HEK293 (cell line): ENCODE measurements at regions of chr2 and their contacts with region 1.

Region 1: GRCh38 chr2:26033818-26034636 is at the start of gene RAB10:
- H3K4me3 ChIP-seq: peak within 1 kb of the TSS; percentile 92
- H3K27ac ChIP-seq: peak within 1 kb of the TSS; percentile 91
- H3K4me1 ChIP-seq: peaks cover 3% of the 10 kb centered on the region; the same call in 1 of the 2 replicates
- CTCF ChIP-seq: 0 out of 2 replicates have a peak, but pooled peaks have one; percentile 7

Region 2: DNA sequence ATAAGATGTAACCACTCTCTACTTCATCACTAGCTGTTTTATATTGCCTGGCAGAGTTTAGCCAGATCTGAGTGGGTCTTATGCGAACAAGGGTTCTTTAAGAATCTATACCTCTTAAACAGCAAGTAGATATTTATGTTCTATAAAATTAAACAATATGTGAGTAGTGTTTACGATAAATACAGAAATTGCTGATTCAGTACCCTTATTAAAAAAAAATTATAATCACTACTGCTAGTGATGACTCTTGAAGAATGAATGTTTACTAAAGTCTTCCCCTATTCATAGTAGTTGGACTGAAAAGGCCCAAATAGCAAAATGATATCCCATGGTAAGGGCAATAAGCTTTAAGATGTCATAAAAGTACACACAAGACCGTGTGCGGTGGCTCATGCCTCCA is 261.9 kb before region 1 on chr2:
- CTCF ChIA-PET with region 1: no interaction called
- POLR2A ChIA-PET with region 1: no interaction called
- H3K4me3 ChIP-seq: no peak overlapping the region
- H3K27ac ChIP-seq: no peak overlapping the region
- H3K4me1 ChIP-seq: no peaks in the 10 kb centered on the region
- CTCF ChIP-seq: no peak

Region 3: GRCh38 chr2:25867396-25868003 is 166.5 kb before region 1 on chr2:
- CTCF ChIA-PET with region 1: no interaction called
- POLR2A ChIA-PET with region 1: no interaction called
- H3K4me3 ChIP-seq: no peak overlapping the region
- H3K27ac ChIP-seq: no peak overlapping the region
- H3K4me1 ChIP-seq: no peaks in the 10 kb centered on the region
- CTCF ChIP-seq: no peak

Region 4: GRCh38 chr2:25878361-25879132 is 155.5 kb before region 1 on chr2 and contains the start of gene ASXL2:
- CTCF ChIA-PET with region 1: no interaction called
- POLR2A ChIA-PET with region 1: interaction called, 11 read pairs
- H3K4me3 ChIP-seq: peak within 1 kb of the TSS; percentile 95
- H3K27ac ChIP-seq: peak within 1 kb of the TSS; percentile 71
- H3K4me1 ChIP-seq: peaks cover 12% of the 10 kb centered on the region
- CTCF ChIP-seq: no peak; the same call in 1 of the 2 replicates

Region 5: DNA sequence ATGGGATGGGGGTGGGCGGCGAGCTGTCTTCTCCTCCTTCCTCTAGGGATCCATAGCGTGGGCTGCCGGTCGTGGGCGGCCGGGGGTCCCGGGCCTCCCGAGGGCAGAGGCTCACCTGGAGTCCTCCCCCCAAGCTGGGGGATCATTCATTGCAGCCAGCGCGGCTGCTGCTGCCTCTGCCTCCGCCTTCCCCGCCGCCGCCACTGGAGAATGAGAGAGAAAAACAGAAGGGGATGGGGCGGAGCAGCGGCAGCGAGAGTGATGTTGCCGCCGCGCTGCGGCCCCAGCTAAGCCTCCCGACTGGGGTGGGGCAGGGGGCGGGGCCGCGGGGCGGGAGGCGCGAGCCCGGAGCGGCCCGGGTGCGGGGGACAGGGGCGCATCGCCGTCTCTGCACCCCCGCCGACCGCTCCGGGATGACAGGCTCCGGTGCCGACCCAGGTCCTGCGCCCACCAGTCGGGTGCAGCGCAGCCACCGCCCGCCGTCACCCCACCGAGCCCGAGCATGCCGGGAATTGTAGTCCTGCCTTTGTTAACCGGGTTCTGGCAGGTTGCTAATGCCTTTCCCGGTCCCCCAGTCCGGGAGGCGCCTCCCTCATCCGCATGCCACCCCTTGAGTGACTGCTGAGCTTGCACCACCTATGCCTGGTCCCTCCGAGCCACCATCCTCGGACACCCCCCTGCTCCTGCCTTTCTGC is 51.6 kb before region 1 on chr2 and contains the start of gene KIF3C:
- CTCF ChIA-PET with region 1: interaction called, 5 read pairs
- POLR2A ChIA-PET with region 1: interaction called, 12 read pairs
- H3K4me3 ChIP-seq: peak within 1 kb of the TSS; percentile 71
- H3K27ac ChIP-seq: peak within 1 kb of the TSS; percentile 65; the same call in 1 of the 2 replicates
- H3K4me1 ChIP-seq: peaks cover 8% of the 10 kb centered on the region
- CTCF ChIP-seq: no peak

Region 6: GRCh38 chr2:26011990-26012856 is 21.8 kb before region 1 on chr2:
- CTCF ChIA-PET with region 1: interaction called, 3 read pairs
- POLR2A ChIA-PET with region 1: interaction called, 24 read pairs
- H3K4me3 ChIP-seq: no peak overlapping the region
- H3K27ac ChIP-seq: no peak overlapping the region
- H3K4me1 ChIP-seq: peaks cover 4% of the 10 kb centered on the region
- CTCF ChIP-seq: no peak

Region 7: GRCh38 chr2:26018176-26018716 is 15.8 kb before region 1 on chr2:
- CTCF ChIA-PET with region 1: interaction called, 6 read pairs
- POLR2A ChIA-PET with region 1: interaction called, 19 read pairs
- H3K4me3 ChIP-seq: no peak overlapping the region
- H3K27ac ChIP-seq: no peak overlapping the region; the same call in 1 of the 2 replicates
- H3K4me1 ChIP-seq: peaks cover 13% of the 10 kb centered on the region
- CTCF ChIP-seq: no peak